ENCODE measurements at regions of chr10 and their contacts with region 1.

Region 1: DNA sequence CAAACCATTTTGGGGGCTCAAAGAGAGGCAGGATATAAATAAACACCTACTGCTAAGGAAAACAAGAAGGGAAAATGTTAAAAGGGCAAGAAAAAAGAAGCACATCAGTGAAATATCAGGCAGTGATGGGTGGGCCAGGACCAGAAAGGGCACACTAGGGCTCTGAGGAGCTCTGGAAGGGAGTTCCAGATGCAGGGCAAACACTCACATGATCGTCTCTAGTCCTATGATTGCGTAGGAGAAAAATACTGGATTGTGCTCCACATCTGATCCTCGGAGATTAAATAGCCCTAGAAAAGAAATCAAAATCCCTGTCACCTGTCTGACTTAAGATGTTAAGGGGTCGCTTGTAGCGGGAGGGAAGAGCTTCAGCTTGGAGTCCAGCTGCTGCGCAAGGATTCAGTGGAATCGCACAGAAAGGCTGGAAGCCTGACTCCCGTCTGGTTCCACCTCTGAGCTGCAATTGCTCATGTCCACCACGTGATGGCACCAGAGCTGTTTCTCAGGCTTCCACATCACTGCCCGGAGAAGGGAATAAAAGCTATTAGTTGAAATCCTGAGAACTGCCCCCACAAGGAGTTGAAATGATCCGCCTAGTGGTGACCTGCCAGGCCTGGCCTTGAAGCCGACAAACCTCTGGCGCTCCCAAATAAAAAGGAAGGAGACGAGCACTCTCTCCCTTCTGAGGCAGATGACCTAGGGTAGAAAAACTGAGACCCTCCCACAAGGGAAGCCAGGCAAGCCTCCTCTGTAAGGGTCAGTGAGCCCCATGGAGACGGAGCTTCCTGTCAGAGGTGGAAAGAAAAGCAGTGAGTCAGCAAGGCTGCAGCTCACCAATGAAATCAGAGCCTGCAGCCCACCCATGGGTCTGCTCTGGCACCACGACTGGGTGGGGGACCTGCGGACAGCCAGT is 39.2 kb downstream of the XPNPEP1 start:
- DNase-seq: peak; percentile 81
- ATAC-seq: peak; percentile 88

Region 2: DNA sequence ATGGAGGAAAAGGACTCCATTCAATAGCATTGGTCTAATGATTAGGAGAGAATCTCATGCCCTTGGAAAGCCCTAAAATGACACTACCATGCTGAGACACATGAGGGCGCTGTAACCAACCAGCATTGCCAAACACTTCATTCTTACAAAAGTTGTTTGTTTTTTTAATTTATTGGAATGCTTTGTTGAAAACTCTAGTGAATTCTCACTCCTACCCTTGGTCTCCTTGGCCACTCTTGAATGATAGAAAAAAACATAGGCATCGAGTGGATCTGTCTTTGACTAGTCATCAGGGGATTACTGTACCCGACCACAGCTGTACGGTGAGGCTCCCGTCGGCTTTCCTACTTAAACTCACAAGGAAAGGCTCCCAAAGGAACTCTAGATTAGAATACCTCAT is 94.4 kb after region 1 on chr10:
- intact Hi-C with region 1: loop called (anchors 10 kb)
- DNase-seq: no peak
- ATAC-seq: peak; percentile 46

Region 3: GRCh38 chr10:110285501-110285900 is 401.4 kb after region 1 on chr10:
- intact Hi-C with region 1: loop called (anchors 10 kb)
- DNase-seq: no peak
- ATAC-seq: no peak